Activated CD8-positive, alpha-beta T cell treated with anti-CD3 and anti-CD28 coated beads, Interleukin-2, amount 10 ng/mL, durations not matched to agents 7 days and 5 days (primary cell): ENCODE measurements at regions of chr5 and their contacts with region 1.

Region 1: DNA sequence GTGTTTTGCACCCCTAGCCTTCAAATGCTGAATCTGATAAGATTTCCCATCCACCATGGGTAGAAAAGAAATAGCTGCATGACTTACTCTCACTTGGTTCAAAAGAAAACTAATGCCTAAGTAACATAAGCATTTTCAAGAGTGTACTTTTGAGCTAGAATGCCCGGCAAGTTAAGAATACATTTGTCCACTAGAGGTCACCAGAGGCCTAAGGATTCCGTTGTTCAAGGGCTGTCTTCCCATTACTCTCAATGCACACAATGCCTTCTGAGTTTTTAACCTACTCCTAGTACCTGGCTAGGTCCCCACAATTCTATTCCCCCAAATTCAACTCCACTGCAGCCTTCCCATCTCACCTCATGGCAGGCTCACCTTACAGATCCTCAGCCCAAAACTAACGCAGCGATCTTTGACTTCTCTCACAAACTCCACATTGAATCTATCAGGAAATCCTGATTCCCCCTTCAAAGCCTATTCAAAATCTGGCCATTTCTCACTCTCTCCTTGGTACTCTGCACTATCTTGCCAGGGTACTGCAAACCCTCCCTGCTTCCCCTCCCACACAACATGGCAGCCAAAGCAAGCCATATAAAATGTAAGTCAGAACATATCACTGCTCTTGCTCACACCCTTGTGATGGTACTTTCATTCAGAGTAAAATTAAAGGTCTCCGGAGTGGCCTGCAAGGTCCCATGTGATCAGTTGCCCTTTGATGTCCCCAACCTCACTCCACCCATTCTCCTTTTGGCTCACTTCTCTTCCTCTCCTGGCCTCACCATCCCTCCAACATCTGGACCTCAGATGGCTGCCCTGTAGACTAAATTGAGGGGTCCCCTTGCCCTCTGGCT is 13.4 kb downstream of the OXCT1 start:
- DNase-seq: peak; percentile 75
- ATAC-seq: peak; percentile 88
- H3K4me3 Mint-ChIP-seq: no peak overlapping the region
- H3K27ac Mint-ChIP-seq: no peak overlapping the region
- H3K4me1 Mint-ChIP-seq: peaks cover 8% of the 10 kb centered on the region
- H3K27me3 Mint-ChIP-seq: no peaks in the 10 kb centered on the region

Region 2: GRCh38 chr5:41843456-41844370 is 13.2 kb before region 1 on chr5:
- CTCF ChIA-PET with region 1: interaction called, 23 read pairs
- POLR2A ChIA-PET with region 1: no interaction called
- DNase-seq: peak; percentile 51
- ATAC-seq: peak; percentile 58
- H3K4me3 Mint-ChIP-seq: no peak overlapping the region
- H3K27ac Mint-ChIP-seq: no peak overlapping the region
- H3K4me1 Mint-ChIP-seq: no peaks in the 10 kb centered on the region
- H3K27me3 Mint-ChIP-seq: no peaks in the 10 kb centered on the region

Region 3: GRCh38 chr5:41869739-41870626 is 13.1 kb after region 1 on chr5 and contains the start of gene OXCT1:
- CTCF ChIA-PET with region 1: interaction called, 44 read pairs
- POLR2A ChIA-PET with region 1: interaction called, 3 read pairs
- DNase-seq: peak; percentile 95
- ATAC-seq: peak; percentile 95
- H3K4me3 Mint-ChIP-seq: peak within 1 kb of the TSS; percentile 88
- H3K27ac Mint-ChIP-seq: peak within 1 kb of the TSS; percentile 91
- H3K4me1 Mint-ChIP-seq: peaks cover 57% of the 10 kb centered on the region
- H3K27me3 Mint-ChIP-seq: no peaks in the 10 kb centered on the region
- total RNA-seq, gene OXCT1: 59.3 to 61.0 TPM

Region 4: GRCh38 chr5:41903892-41904799 is 47.3 kb after region 1 on chr5 and contains the start of gene RIMOC1:
- CTCF ChIA-PET with region 1: interaction called, 15 read pairs
- POLR2A ChIA-PET with region 1: interaction called, 4 read pairs
- DNase-seq: peak; percentile 98
- ATAC-seq: peak; percentile 96
- H3K4me3 Mint-ChIP-seq: peak within 1 kb of the TSS; percentile 92
- H3K27ac Mint-ChIP-seq: peak within 1 kb of the TSS; percentile 95
- H3K4me1 Mint-ChIP-seq: peaks cover 45% of the 10 kb centered on the region
- H3K27me3 Mint-ChIP-seq: peaks cover 7% of the 10 kb centered on the region
- total RNA-seq, gene RIMOC1: 19.9 to 20.8 TPM

Region 5: DNA sequence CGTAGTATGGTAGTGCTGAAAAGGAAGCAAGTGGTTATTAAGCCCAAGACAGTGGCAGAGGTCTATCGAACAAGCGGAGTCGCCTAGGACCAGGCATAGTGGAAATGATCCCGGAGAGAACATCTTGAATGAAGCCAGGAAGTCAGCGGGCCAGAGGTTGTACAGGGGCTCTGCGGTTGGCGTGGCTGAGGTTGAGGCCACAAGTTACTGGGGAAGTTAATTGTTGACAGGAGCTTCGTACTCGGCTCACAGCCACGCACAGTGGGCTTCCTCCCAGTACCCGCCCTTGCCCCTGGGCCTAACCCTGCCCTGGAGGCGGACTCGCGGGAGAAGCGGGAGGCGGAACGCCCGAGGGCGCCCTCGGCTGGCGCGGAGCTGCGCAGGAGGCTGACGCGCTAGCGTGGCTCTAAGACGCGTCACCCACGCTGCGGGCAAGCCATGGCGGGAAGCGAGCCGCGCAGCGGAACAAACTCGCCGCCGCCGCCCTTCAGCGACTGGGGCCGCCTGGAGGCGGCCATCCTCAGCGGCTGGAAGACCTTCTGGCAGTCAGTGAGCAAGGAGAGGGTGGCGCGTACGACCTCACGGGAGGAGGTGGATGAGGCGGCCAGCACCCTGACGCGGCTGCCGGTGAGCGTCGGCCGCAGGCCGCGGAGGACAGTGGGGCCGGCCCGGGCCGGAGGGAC is 68.1 kb after region 1 on chr5 and contains the start of gene FBXO4:
- CTCF ChIA-PET with region 1: interaction called, 12 read pairs
- POLR2A ChIA-PET with region 1: no interaction called
- DNase-seq: peak; percentile 89
- ATAC-seq: peak; percentile 98
- H3K4me3 Mint-ChIP-seq: peak within 1 kb of the TSS; percentile 86
- H3K27ac Mint-ChIP-seq: peak within 1 kb of the TSS; percentile 89
- H3K4me1 Mint-ChIP-seq: peaks cover 14% of the 10 kb centered on the region
- H3K27me3 Mint-ChIP-seq: no peaks in the 10 kb centered on the region
- total RNA-seq, gene FBXO4: 11.6 to 14.4 TPM

Region 6: GRCh38 chr5:42005561-42006153 is 148.8 kb after region 1 on chr5:
- CTCF ChIA-PET with region 1: interaction called, 10 read pairs
- POLR2A ChIA-PET with region 1: no interaction called
- DNase-seq: no peak
- ATAC-seq: no peak
- H3K4me3 Mint-ChIP-seq: no peak overlapping the region
- H3K27ac Mint-ChIP-seq: no peak overlapping the region
- H3K4me1 Mint-ChIP-seq: no peaks in the 10 kb centered on the region
- H3K27me3 Mint-ChIP-seq: no peaks in the 10 kb centered on the region

Region 7: DNA sequence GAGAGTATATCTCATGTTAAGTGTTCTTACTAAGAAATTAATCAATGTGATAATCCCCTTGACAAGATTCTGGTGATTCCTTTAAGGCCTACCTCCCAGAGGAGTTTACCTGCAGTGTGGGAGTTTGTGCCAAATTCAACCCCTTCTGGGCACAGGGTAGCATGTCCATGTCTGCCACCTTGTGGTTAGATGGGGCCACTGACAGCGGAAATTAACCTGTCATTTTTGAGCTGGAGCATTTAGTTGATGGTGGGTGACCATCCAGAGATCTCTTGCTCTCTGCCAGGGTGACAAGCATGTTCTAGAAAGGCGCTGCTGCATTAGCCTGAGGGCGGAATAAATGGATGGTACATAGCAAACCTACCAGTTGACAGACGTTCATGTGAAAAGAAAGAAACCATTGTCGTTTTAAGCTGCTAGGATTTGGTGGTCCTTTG is 200.4 kb after region 1 on chr5:
- CTCF ChIA-PET with region 1: interaction called, 150 read pairs
- POLR2A ChIA-PET with region 1: no interaction called
- DNase-seq: peak; percentile 64
- ATAC-seq: peak; percentile 74
- H3K4me3 Mint-ChIP-seq: no peak overlapping the region
- H3K27ac Mint-ChIP-seq: no peak overlapping the region
- H3K4me1 Mint-ChIP-seq: peaks cover 3% of the 10 kb centered on the region
- H3K27me3 Mint-ChIP-seq: peaks cover 7% of the 10 kb centered on the region